ENCODE measurements at regions of chr2 and their contacts with region 1.

Region 1: DNA sequence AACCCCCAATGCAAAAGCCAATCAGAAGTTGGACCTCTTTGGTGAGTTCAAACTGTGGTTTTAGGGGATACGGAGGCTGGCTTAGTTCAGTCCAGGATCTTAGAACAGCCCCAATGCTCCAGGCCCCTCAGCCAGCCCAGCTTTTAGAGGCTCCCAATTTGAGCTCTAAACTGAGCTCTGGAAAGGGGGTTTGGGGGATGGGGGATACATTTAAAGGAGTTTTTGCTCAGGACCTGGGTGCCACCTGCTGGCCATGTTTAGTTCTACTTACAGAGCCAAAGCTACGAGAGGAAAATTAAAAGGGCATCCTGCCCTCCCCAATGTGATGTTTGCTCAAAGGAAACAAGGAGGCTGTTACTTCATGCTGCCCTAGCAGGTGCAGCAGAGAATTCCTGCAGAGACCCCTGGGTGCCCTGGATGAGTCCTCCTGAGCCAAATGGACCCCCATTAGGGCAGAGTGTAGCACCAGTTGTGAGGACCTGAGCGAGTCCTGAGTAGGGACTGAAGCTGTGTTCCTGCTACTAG is 15.9 kb upstream of the TMEM214 start:
- DNase-seq: peak; percentile 47
- H3K4me3 ChIP-seq: no peak overlapping the region
- H3K27ac ChIP-seq: peak overlapping the region; percentile 47
- H3K27me3 ChIP-seq: no peaks in the 10 kb centered on the region
- CTCF ChIP-seq: peak; percentile 77

Region 2: DNA sequence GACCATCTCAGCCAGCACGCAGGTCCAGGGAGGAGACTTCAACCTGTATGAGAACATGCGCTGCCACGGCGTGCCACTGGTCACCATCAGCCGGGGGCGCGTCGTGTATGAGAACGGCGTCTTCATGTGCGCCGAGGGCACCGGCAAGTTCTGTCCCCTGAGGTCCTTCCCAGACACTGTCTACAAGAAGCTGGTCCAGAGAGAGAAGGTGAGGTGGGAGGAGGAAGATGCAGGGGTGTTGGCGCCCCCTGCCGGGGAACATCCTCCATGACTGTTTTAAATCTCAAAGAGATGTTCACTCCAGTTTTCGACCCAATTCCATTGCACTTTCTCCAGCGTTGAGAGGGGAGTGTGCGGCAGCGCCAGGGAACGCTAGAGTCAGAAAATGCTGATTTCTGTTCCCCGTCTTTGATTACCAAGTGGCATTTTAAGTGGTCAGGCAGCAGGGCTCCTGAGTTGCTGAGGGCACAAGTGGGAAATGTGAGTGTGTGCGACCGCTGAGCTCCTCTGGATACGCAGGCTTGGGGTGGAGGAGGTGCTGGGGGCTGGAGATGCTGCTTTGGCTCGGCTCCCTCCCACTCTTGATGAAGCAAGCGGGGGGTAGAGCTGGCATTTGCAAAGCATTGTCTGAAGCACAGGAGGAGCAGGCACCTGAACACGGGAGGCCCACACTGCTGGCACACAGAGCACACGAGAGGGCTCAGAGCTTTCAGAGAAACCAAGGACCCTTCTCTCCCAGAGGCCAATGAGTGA is 74.1 kb before region 1 on chr2:
- CTCF ChIA-PET with region 1: interaction called, 10 read pairs
- POLR2A ChIA-PET with region 1: no interaction called
- DNase-seq: no peak
- H3K4me3 ChIP-seq: no peak overlapping the region
- H3K27ac ChIP-seq: no peak overlapping the region
- H3K27me3 ChIP-seq: peaks cover 40% of the 10 kb centered on the region
- CTCF ChIP-seq: peak; percentile 77

Region 3: DNA sequence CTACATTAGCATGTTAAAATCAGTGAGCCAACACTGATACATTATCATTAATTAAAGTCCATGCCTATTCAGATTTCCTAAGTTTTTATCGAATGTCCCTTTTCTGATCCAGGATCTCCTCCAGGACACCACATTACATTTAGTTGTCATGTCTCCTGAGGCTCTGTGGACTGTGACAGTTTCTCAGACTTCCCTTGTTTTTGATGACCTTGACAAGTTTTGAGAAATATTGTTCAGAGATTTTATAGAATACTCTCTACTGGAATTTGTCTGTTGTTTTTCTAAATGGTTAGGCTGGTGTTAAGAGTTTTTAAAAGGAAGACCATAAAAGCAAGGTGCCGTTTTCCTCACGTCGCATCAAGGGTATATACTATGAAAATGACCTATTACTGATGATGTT is 62.7 kb before region 1 on chr2:
- CTCF ChIA-PET with region 1: interaction called, 250 read pairs
- POLR2A ChIA-PET with region 1: no interaction called
- DNase-seq: no peak
- H3K4me3 ChIP-seq: no peak overlapping the region
- H3K27ac ChIP-seq: no peak overlapping the region
- H3K27me3 ChIP-seq: peaks cover 38% of the 10 kb centered on the region
- CTCF ChIP-seq: no peak

Region 4: DNA sequence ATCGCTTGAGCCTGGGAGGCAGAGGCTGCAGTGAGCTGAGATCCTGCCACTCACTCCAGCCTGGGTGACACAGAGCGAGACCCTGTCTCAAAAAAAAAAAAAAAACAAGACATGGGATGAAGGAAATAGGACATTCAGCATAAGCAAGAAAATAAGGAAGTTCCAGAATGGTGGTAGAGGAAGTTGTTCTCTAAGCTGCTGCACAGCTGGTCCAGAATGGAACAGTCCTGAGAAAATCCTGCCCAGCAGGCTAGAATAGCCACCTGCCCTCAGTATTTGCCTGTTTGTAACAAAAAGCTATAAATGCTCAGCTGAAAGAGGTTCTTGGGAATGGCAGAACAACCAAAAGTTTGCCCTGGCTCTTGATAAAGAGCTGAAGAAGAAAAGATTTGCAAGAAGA is 57.5 kb before region 1 on chr2:
- CTCF ChIA-PET with region 1: interaction called, 250 read pairs
- POLR2A ChIA-PET with region 1: interaction called, 20 read pairs
- DNase-seq: no peak
- H3K4me3 ChIP-seq: no peak overlapping the region
- H3K27ac ChIP-seq: no peak overlapping the region
- H3K27me3 ChIP-seq: peaks cover 46% of the 10 kb centered on the region
- CTCF ChIP-seq: no peak

Region 5: GRCh38 chr2:26970921-26971627 is 45.8 kb before region 1 on chr2:
- CTCF ChIA-PET with region 1: interaction called, 250 read pairs
- POLR2A ChIA-PET with region 1: no interaction called
- DNase-seq: no peak
- H3K4me3 ChIP-seq: peak overlapping the region; percentile 86
- H3K27ac ChIP-seq: peak overlapping the region; percentile 31
- H3K27me3 ChIP-seq: no peaks in the 10 kb centered on the region
- CTCF ChIP-seq: no peak

Region 6: GRCh38 chr2:26976237-26976636 is 40.6 kb before region 1 on chr2:
- CTCF ChIA-PET with region 1: interaction called, 13 read pairs
- POLR2A ChIA-PET with region 1: no interaction called
- DNase-seq: no peak
- H3K4me3 ChIP-seq: no peak overlapping the region
- H3K27ac ChIP-seq: no peak overlapping the region
- H3K27me3 ChIP-seq: no peaks in the 10 kb centered on the region
- CTCF ChIP-seq: no peak

Region 7: DNA sequence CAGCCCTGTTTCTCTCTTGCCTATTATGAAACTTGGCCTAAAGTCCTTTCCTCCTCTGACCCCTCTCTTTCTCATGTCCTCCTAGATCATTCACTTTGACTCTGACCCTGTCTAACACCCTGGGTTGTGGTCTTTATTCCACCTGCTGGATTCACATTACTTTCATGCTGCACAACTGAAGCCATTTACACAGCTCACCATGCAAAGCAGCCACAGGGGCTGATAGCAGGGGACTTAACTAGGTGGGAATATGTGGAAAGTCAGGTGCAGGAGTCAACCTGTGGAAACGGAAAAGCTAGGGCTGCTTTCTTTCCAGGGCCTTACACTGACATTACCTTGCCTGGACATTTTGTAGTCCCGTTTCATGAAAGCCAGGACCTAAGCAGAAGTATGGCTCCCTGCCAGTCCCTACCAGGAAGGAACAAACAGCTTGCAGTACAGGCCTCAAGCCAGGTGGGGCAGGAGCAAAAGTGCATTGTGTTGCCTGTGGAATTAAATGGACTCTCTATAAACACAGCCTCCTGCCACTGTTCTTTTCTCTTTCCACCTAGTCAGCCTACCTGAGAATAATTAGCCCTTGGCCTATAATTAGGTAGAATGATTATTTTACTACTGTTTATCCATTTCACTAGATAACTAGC is 34.6 kb before region 1 on chr2:
- CTCF ChIA-PET with region 1: interaction called, 10 read pairs
- POLR2A ChIA-PET with region 1: no interaction called
- DNase-seq: no peak
- H3K4me3 ChIP-seq: no peak overlapping the region
- H3K27ac ChIP-seq: no peak overlapping the region
- H3K27me3 ChIP-seq: no peaks in the 10 kb centered on the region
- CTCF ChIP-seq: peak; percentile 27; the same call in 1 of the 2 replicates